ENCODE measurements at regions of chr7 and their contacts with region 1.

Region 1: GRCh38 chr7:149624419-149625339 is 127.1 kb upstream of the ZNF746 start:
- DNase-seq: peak; percentile 95
- ATAC-seq: peak; percentile 86
- H3K4me3 Mint-ChIP-seq: peak overlapping the region; percentile 80
- H3K27ac Mint-ChIP-seq: peak overlapping the region; percentile 80
- H3K4me1 Mint-ChIP-seq: peaks cover 38% of the 10 kb centered on the region
- H3K27me3 Mint-ChIP-seq: peaks cover 3% of the 10 kb centered on the region

Region 2: GRCh38 chr7:149090397-149091195 is 534.1 kb before region 1 on chr7 and contains the start of gene ZNF786:
- CTCF ChIA-PET with region 1: no interaction called
- POLR2A ChIA-PET with region 1: no interaction called
- intact Hi-C with region 1: loop called in 1 of 2 experiments (anchors 5 kb)
- DNase-seq: peak; percentile 97
- ATAC-seq: peak; percentile 87
- H3K4me3 Mint-ChIP-seq: peak within 1 kb of the TSS; percentile 89
- H3K27ac Mint-ChIP-seq: peak within 1 kb of the TSS; percentile 100
- H3K4me1 Mint-ChIP-seq: peaks cover 19% of the 10 kb centered on the region
- H3K27me3 Mint-ChIP-seq: no peaks in the 10 kb centered on the region
- total RNA-seq, gene ZNF786: 4.4 to 4.8 TPM

Region 3: GRCh38 chr7:149195180-149196150 is 429.2 kb before region 1 on chr7 and contains the start of gene ZNF282:
- CTCF ChIA-PET with region 1: interaction called, 5 read pairs
- POLR2A ChIA-PET with region 1: no interaction called
- intact Hi-C with region 1: loop called in 1 of 2 experiments (anchors 5 kb)
- DNase-seq: peak; percentile 89
- ATAC-seq: peak; percentile 91
- H3K4me3 Mint-ChIP-seq: peak within 1 kb of the TSS; percentile 95
- H3K27ac Mint-ChIP-seq: peak within 1 kb of the TSS; percentile 94
- H3K4me1 Mint-ChIP-seq: peaks cover 42% of the 10 kb centered on the region
- H3K27me3 Mint-ChIP-seq: no peaks in the 10 kb centered on the region
- total RNA-seq, gene ZNF282: 41.1 to 46.3 TPM

Region 4: DNA sequence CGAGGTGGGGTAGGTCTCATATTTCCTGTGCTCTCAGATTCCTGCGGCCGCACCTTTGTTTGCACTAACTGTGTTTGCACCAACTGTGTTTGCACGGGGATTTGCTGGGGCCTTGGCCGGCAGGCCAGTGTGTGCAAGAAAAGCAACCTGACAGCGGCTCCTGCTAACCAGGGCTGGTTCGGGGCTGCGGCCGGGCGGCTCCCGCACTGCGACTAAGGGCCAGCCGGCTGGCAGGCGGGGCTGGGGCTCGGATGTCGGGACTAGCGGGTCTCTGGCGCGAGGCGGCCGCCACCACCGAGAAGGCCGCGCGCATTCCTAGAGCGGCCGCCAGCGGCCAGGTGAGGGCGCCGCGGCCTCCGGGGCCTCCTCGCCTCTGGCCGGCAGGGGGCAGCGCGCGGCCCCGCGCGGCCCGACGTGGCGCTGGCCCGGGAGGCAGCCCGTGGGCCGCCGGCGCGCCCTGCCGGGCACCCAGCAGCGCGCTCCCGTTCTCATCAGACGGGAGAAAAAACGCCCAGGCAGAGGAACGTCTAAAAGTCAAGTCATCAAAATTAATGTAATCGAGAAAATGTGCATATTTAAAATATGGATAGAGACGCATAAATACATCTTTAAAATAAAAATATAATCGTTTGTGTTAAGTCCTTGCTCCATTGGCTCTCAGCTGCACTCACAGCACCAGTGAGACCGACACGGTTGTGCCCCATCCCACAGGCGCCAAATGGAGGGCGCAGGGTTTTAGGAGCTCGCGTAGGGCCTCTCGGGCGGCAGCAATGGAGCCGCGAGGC is 202.4 kb before region 1 on chr7:
- CTCF ChIA-PET with region 1: interaction called, 6 read pairs
- POLR2A ChIA-PET with region 1: no interaction called
- intact Hi-C with region 1: loop called (anchors 1 kb)
- DNase-seq: peak; percentile 84
- ATAC-seq: peak; percentile 98
- H3K4me3 Mint-ChIP-seq: peak overlapping the region; percentile 65
- H3K27ac Mint-ChIP-seq: peak overlapping the region; percentile 63
- H3K4me1 Mint-ChIP-seq: peaks cover 9% of the 10 kb centered on the region
- H3K27me3 Mint-ChIP-seq: no peaks in the 10 kb centered on the region

Region 5: DNA sequence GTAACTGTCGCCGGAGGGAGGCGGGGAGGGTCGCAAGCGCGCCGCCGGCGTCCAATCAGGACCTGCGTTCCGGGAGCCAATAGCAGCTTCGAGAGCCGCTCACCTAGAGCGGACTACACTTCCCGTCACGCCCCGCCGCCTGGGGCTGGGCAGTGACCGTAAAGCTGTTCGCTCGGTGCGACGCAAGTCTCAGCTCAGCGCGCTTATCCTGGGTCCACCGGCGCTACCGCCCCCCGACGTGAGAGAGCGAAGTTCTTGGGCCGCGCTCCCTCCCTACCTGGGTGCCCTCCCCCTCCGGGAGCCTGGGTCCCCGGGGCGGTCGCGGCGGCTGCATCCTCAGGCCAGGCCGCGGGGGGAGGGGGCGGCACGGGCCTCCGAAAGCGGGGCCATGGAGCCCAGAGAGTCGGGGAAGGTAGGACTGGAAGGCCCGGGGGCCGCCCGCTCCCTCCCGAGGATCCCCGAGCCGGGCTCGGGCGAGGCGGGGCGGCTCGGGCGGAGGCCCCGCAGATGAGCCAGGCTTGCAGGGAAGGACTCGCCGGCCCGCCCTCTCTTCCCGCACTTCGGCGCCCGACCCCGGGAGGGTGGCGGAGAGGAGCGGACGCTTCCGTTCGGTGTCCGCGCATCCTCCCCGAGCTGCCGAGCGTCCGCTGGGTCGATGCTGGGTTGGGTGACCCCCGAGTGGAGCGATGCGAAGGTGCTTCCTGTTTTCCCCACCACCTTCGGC is 213.7 kb after region 1 on chr7 and contains the start of gene ZNF862:
- CTCF ChIA-PET with region 1: no interaction called
- POLR2A ChIA-PET with region 1: no interaction called
- intact Hi-C with region 1: loop called in 1 of 2 experiments (anchors 5 kb)
- DNase-seq: peak; percentile 98
- ATAC-seq: peak; percentile 98
- H3K4me3 Mint-ChIP-seq: peak within 1 kb of the TSS; percentile 78
- H3K27ac Mint-ChIP-seq: peak within 1 kb of the TSS; percentile 74
- H3K4me1 Mint-ChIP-seq: peaks cover 28% of the 10 kb centered on the region
- H3K27me3 Mint-ChIP-seq: no peaks in the 10 kb centered on the region
- total RNA-seq, gene ZNF862: 17.6 to 18.3 TPM

Measured in activated CD4-positive, alpha-beta T cell treated with anti-CD3 and anti-CD28 coated beads for 36 hours (primary cell).